Right cardiac atrium (tissue), 5 donors: ENCODE measurements at regions of chr2 and their contacts with region 1.

Region 1: DNA sequence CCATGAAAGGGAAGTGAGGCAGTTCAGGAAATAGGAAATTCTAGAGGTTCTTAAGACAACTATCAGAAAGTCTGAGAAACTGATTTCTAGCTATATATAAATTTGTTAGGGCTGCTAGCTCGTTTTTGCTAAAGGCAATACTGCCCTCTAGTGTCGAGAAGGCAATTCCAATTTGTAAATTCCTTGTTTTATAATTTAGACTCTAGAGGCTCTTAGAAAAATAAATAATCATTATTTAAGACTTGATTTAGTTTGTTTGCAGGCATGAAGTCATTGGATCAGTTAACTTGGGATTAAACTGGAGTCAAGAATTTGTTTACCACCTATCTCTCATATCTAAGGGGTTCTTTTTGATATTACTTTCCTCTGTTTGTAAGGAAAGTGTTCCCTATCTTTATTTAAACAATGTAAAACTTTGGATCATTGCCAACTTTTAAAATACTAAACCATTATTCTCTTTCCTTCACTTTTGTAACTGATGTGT is 66.2 kb downstream of the ACVR2A start:
- DNase-seq: no peak
- ATAC-seq: peak in 1 of 2 donors; percentile 39
- H3K4me3 ChIP-seq: no peak overlapping the region
- H3K27ac ChIP-seq: no peak overlapping the region
- H3K4me1 ChIP-seq: no peaks in the 10 kb centered on the region
- H3K27me3 ChIP-seq: no peaks in the 10 kb centered on the region

Region 2: DNA sequence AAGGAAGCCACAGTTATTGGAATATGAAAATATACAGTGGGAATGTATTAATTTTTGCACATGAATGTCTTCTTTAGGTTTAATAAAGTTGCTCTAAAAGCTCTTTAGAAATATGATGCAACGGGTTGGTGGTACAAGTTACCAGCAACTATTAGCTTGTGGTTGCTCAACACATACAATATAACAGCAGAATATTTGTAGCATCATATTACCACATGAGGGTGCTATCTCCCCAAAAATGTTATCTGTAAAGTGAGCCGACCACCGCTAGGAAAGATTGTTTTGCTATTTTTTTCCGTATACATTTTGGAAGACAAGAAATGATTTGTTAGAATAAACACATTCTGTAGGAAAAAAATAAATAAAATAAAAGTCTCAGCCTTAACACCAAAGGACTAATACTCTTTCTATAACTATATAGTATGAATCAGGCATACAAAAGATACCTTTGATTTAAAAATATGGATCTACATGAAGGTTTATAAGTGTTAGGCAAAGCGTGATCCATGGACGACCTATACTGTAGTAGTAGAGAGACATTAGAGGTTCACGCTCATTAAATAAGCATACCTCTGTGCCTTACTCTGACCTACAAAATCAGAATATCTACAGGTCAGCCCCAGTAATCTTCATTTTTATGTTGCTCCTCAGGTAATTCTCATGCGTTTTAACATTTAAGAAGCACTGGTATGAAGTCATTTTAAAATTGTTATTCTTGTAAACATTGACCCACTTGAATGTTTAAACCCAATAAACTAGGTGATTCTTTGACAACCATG is 1176.8 kb before region 1 on chr2:
- intact Hi-C with region 1: loop called in 2 of 4 experiments (anchors 10 kb)
- DNase-seq: no peak
- ATAC-seq: peak in 1 of 2 donors; percentile 54
- H3K4me3 ChIP-seq: no peak overlapping the region
- H3K27ac ChIP-seq: no peak overlapping the region
- H3K4me1 ChIP-seq: no peaks in the 10 kb centered on the region
- H3K27me3 ChIP-seq: no peaks in the 10 kb centered on the region

Region 3: GRCh38 chr2:146927080-146927711 is 983.8 kb before region 1 on chr2:
- intact Hi-C with region 1: loop called in 1 of 4 experiments (anchors 10 kb)
- DNase-seq: peak; percentile 47 to 69 (median 62)
- ATAC-seq: peak; percentile 58 to 83
- H3K4me3 ChIP-seq: no peak overlapping the region
- H3K27ac ChIP-seq: no peak overlapping the region
- H3K4me1 ChIP-seq: no peaks in the 10 kb centered on the region
- H3K27me3 ChIP-seq: no peaks in the 10 kb centered on the region

Region 4: GRCh38 chr2:147082850-147083522 is 828.0 kb before region 1 on chr2:
- intact Hi-C with region 1: loop called in 3 of 4 experiments (anchors 5 to 10 kb)
- DNase-seq: no peak
- ATAC-seq: peak in 1 of 2 donors; percentile 72
- H3K4me3 ChIP-seq: no peak overlapping the region
- H3K27ac ChIP-seq: no peak overlapping the region
- H3K4me1 ChIP-seq: no peaks in the 10 kb centered on the region
- H3K27me3 ChIP-seq: no peaks in the 10 kb centered on the region